Posterior cingulate gyrus (tissue), 11 donors: ENCODE measurements at regions of chr6 and their contacts with region 1.

Region 1: DNA sequence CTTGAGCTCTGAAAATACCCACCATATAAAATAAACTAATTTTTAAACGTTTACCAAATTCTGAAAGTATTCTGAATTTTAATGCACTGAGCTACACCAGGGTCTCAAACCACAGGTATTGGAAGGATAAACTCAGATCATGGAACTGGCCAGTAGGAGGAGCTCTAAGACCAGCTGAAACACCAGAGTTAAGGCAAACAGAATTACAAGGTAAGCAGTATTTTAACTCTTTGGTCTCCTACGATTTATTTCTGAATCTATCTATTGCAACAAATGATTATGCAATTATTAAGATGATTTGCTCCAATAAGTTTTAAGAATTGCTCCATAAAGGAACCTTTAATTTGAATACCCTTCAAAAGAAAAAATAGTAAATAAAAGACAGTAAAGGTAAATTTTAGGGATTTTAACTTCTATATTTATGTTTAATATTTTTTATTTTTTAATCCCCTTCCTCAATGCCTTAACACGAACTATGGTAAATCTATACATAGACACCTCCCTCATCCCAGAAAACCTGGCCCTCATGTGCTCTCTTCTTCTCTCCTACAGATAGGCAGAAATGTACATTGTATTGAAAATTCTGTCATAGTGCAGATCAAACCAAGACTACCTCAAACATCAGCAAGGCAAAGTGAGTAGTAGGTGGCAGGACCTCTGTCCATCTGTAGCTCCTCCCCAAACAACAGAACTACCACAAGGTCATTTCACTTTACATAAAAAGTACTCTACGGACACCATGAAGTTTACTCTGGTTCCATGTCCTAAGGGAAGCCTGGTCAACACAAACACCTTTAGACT is 58.4 kb downstream of the SMLR1 start:
- DNase-seq: peak in 6 of 10 donors; percentile 21 to 85 (median 70)

Region 2: DNA sequence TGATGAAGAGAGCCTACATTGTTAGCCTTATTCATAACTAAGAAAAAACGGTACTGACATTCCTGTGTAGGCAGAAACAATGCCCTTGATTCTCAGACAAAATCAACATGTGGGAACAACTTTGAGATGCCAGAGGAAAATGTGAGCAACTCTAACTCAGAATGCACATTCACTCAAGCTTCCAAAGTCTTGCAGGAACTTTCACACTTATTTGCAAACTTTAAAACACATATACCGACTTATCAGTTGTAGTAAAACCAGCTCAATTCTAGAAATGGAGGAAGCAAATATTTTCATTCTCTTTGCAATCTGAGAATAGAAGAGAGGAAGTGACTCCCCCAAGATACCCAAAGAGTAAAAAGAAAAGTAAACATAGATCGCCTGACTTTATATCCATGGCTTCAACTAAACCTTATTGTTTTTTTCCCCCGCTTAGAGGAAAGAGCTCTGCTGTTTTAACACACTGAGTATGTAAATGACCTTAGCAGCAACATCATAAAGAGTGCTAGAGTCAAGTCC is 59.9 kb after region 1 on chr6:
- intact Hi-C with region 1: loop called (anchors 10 kb)
- DNase-seq: no peak

Region 3: GRCh38 chr6:131063028-131063763 is 177.6 kb after region 1 on chr6 and contains the start of gene EPB41L2:
- intact Hi-C with region 1: loop called (anchors 2 kb)
- DNase-seq: peak; percentile 76 to 98 (median 84)

Region 4: DNA sequence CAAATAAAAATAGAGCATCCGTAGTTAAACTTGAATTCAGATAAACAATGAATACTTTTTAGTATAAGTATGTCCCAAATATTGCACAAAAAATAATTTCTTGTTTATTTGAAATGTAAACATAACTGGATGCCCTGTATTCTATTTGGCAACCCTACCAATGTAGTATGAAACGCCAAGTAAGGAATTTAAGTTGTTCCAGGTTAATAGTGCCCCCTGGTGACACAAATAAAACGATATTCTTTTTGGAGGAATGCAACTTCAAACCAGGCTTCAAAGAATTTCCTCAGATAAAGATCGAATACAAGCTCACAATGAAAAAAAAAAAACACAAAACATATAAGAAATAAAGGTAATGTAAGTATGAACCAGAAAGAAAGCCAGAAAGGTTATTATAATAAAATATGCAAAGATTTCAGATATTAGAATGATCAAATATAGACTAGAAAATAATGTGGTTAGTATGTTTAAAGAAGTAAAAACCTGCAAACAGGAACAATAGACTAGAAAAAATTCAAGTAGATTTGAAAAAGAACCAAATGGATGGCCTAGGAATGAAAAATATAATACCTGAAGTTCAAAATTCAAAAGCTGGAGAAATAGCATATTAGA is 231.3 kb after region 1 on chr6:
- intact Hi-C with region 1: loop called (anchors 1 kb)
- DNase-seq: no peak

Region 5: DNA sequence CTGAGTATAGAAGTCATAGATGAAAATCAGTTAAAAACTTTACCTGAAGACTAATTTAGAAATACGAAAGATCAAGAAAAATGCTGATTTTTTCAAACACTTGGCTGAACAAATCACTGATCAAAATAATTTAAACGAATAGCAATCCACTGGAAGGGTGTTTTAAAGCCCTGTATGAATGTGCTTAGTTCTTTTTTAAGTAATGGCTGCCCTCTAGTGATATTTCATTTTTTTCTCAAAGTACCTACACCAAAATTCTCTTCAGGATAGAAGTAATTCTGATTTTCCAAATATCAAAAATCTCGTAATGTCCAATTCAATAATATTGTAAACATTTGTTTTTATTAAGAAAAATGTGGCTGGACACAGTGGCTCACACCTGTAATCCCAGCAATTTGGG is 282.2 kb after region 1 on chr6:
- intact Hi-C with region 1: loop called (anchors 1 kb)
- DNase-seq: no peak

Region 6: GRCh38 chr6:131532580-131533039 is 647.0 kb after region 1 on chr6:
- intact Hi-C with region 1: loop called (anchors 5 kb)
- DNase-seq: no peak